ENCODE measurements at regions of chr12 and their contacts with region 1.

Region 1: DNA sequence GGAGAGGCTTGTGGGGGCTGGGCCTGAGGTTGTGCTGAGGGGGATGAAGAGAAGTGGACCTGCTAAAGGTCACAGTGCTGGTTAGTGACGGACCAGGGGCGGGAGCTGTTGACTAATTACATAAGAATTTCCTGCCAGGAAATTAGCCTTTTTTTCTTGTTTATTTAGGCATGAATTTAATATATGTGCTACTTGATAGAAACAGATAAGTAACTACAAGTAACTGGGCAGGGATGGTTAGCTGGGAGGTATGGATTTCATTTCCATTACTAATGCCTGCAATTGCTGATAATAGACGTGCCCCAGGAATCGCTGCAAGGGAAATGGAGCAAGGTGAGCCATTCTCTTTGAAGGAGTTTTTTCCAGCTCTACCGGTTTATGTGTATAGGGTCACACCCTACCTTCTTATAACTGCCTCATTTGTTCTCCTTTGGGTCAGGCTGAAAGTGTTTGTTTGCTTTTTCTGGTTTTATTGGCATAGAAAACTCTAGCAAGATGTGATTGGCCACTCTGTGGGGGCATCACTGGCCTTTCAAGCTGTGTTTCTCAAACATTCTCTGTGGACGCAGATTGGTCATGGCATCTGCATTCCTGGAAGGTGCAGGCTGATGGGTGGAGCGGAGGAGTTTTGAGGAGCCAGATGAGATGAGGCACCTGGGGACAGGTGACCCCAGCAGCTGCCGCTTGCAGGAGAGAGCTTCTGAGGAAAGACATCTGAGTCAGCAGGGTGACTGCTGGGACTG is 19.1 kb upstream of the GPRC5A start:
- DNase-seq: peak; percentile 91
- H3K4me3 Mint-ChIP-seq: peak overlapping the region; percentile 43
- H3K27ac Mint-ChIP-seq: peak overlapping the region; percentile 99
- H3K4me1 Mint-ChIP-seq: peaks cover 83% of the 10 kb centered on the region
- H3K27me3 Mint-ChIP-seq: no peaks in the 10 kb centered on the region
- CTCF ChIP-seq: no peak

Region 2: GRCh38 chr12:12837025-12837872 is 35.1 kb before region 1 on chr12:
- CTCF ChIA-PET with region 1: interaction called, 11 read pairs
- intact Hi-C with region 1: loop called (anchors 2 kb)
- DNase-seq: peak; percentile 64
- H3K4me3 Mint-ChIP-seq: peak overlapping the region; percentile 25
- H3K27ac Mint-ChIP-seq: peak overlapping the region; percentile 82
- H3K4me1 Mint-ChIP-seq: peaks cover 70% of the 10 kb centered on the region
- H3K27me3 Mint-ChIP-seq: no peaks in the 10 kb centered on the region
- CTCF ChIP-seq: no peak

Region 3: DNA sequence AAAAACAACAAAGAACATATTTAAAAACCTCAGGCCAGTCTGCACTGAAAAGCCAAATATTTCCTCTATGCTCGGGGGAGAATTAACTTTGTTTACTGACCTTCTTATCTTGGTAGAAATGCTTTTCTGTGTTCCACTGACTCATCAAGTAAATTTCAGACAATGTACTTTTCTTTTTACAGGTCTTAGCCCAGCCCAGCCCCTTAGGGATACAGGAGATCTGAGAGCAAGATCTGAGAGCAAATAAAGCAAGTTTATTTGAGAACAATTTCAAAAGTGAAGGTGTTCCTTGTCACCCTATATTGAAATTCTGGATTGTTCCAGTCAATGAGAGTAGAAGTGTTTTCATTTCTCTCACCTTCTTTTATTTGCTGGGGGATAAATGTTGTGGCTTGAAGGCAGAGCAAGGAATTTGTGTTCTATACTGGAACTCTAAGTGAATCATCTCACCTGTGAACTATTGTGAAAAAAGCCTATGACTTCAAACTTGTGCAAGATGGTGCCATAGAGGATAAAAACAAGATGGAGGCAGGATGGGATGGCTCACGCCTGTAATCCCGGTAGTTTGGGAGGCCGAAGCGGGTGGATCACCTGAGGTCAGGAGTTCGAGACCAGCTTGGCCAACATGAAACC is 11.2 kb after region 1 on chr12:
- CTCF ChIA-PET with region 1: interaction called, 7 read pairs
- intact Hi-C with region 1: loop called (anchors 1 kb)
- DNase-seq: no peak
- H3K4me3 Mint-ChIP-seq: peak overlapping the region; percentile 65
- H3K27ac Mint-ChIP-seq: peak overlapping the region; percentile 92
- H3K4me1 Mint-ChIP-seq: peaks cover 91% of the 10 kb centered on the region
- H3K27me3 Mint-ChIP-seq: no peaks in the 10 kb centered on the region
- CTCF ChIP-seq: no peak

Region 4: GRCh38 chr12:12890815-12891645 is 18.7 kb after region 1 on chr12 and contains the start of gene GPRC5A:
- CTCF ChIA-PET with region 1: interaction called, 21 read pairs
- intact Hi-C with region 1: loop called (anchors 1 kb)
- DNase-seq: peak; percentile 98
- H3K4me3 Mint-ChIP-seq: peak within 1 kb of the TSS; percentile 95
- H3K27ac Mint-ChIP-seq: peak within 1 kb of the TSS; percentile 76
- H3K4me1 Mint-ChIP-seq: peaks cover 46% of the 10 kb centered on the region
- H3K27me3 Mint-ChIP-seq: no peaks in the 10 kb centered on the region
- CTCF ChIP-seq: no peak
- total RNA-seq, gene GPRC5A: 742 and 748 TPM in 2 replicates

Measured in Calu3 (cell line).